ENCODE measurements at regions of chr15 and their contacts with region 1.

Region 1: DNA sequence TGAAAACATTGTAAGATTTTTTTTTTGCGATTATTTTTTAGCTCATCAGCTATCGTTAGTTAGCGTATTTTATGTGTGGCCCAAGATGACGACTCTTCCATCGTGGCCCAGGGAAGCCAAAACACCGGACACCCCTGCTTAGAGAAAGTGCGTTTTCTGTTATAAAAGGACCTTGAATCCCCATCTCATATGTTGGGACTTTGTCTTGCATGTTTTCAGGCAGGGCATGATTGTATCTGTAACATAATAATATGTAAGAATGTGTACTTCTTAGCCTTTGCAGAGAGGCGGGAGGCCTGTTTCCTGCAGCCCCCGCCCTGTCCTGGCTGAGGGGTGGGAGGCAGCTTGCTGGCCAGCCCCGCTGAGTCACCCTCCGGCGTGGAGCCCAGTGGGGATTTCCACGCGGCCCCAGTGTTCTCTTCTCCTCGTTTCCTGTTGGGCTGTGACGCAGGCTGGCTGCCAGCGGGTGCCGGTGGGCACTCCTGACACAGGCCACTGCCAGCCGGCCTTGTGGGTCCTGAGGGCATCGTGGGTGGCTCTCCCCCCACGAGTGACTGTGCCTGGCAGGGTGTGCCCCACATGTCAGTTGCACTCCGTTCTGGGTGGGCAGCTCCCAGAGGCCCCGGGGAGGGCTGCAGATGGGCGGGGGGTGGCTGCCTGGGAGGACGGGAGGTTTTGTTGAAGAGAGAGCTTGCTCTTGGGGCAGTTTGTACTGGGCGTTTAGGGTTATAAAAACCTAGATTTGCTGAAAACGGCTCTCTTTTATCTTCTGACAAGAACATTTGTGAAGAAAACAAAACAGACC is 55.6 kb downstream of the SMAD3 start:
- DNase-seq: no peak
- ATAC-seq: peak; percentile 22
- H3K4me3 ChIP-seq: no peak overlapping the region
- H3K27ac ChIP-seq: peak overlapping the region; percentile 100
- H3K4me1 ChIP-seq: peaks cover 97% of the 10 kb centered on the region
- H3K27me3 ChIP-seq: no peaks in the 10 kb centered on the region
- CTCF ChIP-seq: no peak

Region 2: GRCh38 chr15:67076147-67076843 is 44.7 kb before region 1 on chr15:
- CTCF ChIA-PET with region 1: no interaction called
- POLR2A ChIA-PET with region 1: interaction called, 4 read pairs
- in situ Hi-C with region 1: no loop called
- intact Hi-C with region 1: loop called (anchors 10 kb)
- DNase-seq: no peak
- ATAC-seq: peak; percentile 26
- H3K4me3 ChIP-seq: peak overlapping the region in 1 of 2 experiments; percentile 7; a peak in 1 of 4 replicates
- H3K27ac ChIP-seq: peak overlapping the region; percentile 100
- H3K4me1 ChIP-seq: peaks cover 96% of the 10 kb centered on the region
- H3K27me3 ChIP-seq: no peaks in the 10 kb centered on the region
- CTCF ChIP-seq: no peak

Region 3: GRCh38 chr15:67185621-67186225 is 64.7 kb after region 1 on chr15:
- CTCF ChIA-PET with region 1: no interaction called
- POLR2A ChIA-PET with region 1: no interaction called
- in situ Hi-C with region 1: no loop called
- intact Hi-C with region 1: no loop called
- DNase-seq: no peak
- ATAC-seq: peak; percentile 15; the same call in 1 of the 2 replicates
- H3K4me3 ChIP-seq: no peak overlapping the region
- H3K27ac ChIP-seq: peak overlapping the region; percentile 84
- H3K4me1 ChIP-seq: peaks cover 91% of the 10 kb centered on the region
- H3K27me3 ChIP-seq: no peaks in the 10 kb centered on the region
- CTCF ChIP-seq: no peak

Measured in Panc1 (cell line).